ENCODE measurements at regions of chr11 and their contacts with region 1.

Region 1: GRCh38 chr11:29184939-29185890 is 831.6 kb downstream of the KCNA4 start:
- DNase-seq: no peak
- H3K4me3 ChIP-seq: no peak overlapping the region
- H3K4me3 Mint-ChIP-seq: no peak overlapping the region
- H3K27ac Mint-ChIP-seq: no peak overlapping the region
- H3K4me1 ChIP-seq: peaks cover 28% of the 10 kb centered on the region
- H3K4me1 Mint-ChIP-seq: peaks cover 17% of the 10 kb centered on the region
- H3K27me3 ChIP-seq: no peaks in the 10 kb centered on the region
- H3K27me3 Mint-ChIP-seq: no peaks in the 10 kb centered on the region
- CTCF ChIP-seq: no peak

Region 2: DNA sequence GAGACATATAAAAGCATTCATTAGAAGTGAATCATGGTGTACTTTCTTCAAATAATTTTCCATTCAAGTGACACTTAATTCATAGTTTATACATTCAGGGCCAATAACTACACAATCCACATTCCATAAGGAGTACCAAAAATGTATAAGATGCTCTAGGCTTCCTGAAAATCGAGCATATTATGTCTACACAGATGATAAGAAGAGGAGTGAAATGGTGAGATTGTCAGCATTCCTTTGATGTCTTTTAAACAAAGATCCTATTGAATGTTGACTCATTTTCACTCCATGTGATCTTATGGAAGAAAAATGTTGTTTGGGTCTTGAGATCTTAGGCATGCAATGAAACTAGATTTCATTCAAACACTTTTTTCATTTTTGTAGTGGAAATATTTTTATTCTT is 11.6 kb before region 1 on chr11:
- CTCF ChIA-PET with region 1: no interaction called
- POLR2A ChIA-PET with region 1: no interaction called
- intact Hi-C with region 1: loop called (anchors 2 kb)
- DNase-seq: peak in 1 of 2 experiments; percentile 12
- H3K4me3 ChIP-seq: no peak overlapping the region
- H3K4me3 Mint-ChIP-seq: no peak overlapping the region
- H3K27ac Mint-ChIP-seq: no peak overlapping the region
- H3K4me1 ChIP-seq: peaks cover 15% of the 10 kb centered on the region
- H3K4me1 Mint-ChIP-seq: peaks cover 10% of the 10 kb centered on the region
- H3K27me3 ChIP-seq: no peaks in the 10 kb centered on the region
- H3K27me3 Mint-ChIP-seq: no peaks in the 10 kb centered on the region
- CTCF ChIP-seq: no peak

Region 3: DNA sequence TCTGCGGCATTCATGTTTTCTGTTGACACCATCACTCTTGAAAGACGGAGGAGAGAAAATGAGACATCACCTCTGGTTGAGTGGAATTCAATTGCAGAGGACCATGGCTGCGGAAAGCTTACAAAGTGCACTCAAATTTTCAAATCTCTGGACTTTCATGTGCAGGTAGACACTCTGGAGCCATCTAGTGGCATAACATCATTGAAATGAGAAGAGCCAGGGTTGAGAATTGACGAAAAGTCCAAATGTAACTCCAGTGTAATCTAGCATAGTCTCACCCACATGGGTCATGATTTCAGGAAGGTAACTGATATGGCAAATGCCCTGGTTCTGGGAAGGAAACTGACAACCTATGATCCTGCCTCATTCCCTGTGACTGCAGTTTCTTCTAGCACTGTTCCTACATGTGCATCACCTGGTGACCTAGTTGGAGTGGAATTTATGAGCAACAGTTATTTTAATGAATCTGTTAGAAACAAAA is 143.8 kb after region 1 on chr11:
- CTCF ChIA-PET with region 1: no interaction called
- POLR2A ChIA-PET with region 1: no interaction called
- intact Hi-C with region 1: loop called (anchors 1 kb)
- DNase-seq: peak in 1 of 2 experiments; percentile 54
- H3K4me3 ChIP-seq: no peak overlapping the region
- H3K4me3 Mint-ChIP-seq: no peak overlapping the region
- H3K27ac Mint-ChIP-seq: no peak overlapping the region
- H3K4me1 ChIP-seq: peaks cover 13% of the 10 kb centered on the region
- H3K4me1 Mint-ChIP-seq: peaks cover 14% of the 10 kb centered on the region
- H3K27me3 ChIP-seq: no peaks in the 10 kb centered on the region
- H3K27me3 Mint-ChIP-seq: no peaks in the 10 kb centered on the region
- CTCF ChIP-seq: peak; percentile 70 to 78